ENCODE measurements at regions of chr12 and their contacts with region 1.

Region 1: GRCh38 chr12:87274594-87275245 is 754.5 kb downstream of the C12orf50 start:
- DNase-seq: peak; percentile 47
- H3K4me3 ChIP-seq: no peak overlapping the region
- H3K27ac ChIP-seq: no peak overlapping the region
- H3K4me1 ChIP-seq: no peaks in the 10 kb centered on the region
- H3K27me3 ChIP-seq: no peaks in the 10 kb centered on the region
- CTCF ChIP-seq: peak; percentile 52 to 57
- POLR2A ChIP-seq: no peak

Region 2: GRCh38 chr12:87259391-87259790 is 15.3 kb before region 1 on chr12:
- CTCF ChIA-PET with region 1: interaction called, 9 read pairs
- POLR2A ChIA-PET with region 1: no interaction called
- dilution Hi-C with region 1: no loop called
- intact Hi-C with region 1: loop called (anchors 2 kb)
- DNase-seq: peak; percentile 38
- H3K4me3 ChIP-seq: no peak overlapping the region
- H3K27ac ChIP-seq: no peak overlapping the region
- H3K4me1 ChIP-seq: no peaks in the 10 kb centered on the region
- H3K27me3 ChIP-seq: no peaks in the 10 kb centered on the region
- CTCF ChIP-seq: no peak
- POLR2A ChIP-seq: no peak

Region 3: GRCh38 chr12:87323369-87323768 is 48.6 kb after region 1 on chr12:
- CTCF ChIA-PET with region 1: no interaction called
- POLR2A ChIA-PET with region 1: no interaction called
- dilution Hi-C with region 1: no loop called
- intact Hi-C with region 1: loop called (anchors 2 kb)
- DNase-seq: peak; percentile 91
- H3K4me3 ChIP-seq: no peak overlapping the region
- H3K27ac ChIP-seq: peak overlapping the region; percentile 66
- H3K4me1 ChIP-seq: peaks cover 28% of the 10 kb centered on the region
- H3K27me3 ChIP-seq: no peaks in the 10 kb centered on the region
- CTCF ChIP-seq: no peak
- POLR2A ChIP-seq: no peak

Region 4: DNA sequence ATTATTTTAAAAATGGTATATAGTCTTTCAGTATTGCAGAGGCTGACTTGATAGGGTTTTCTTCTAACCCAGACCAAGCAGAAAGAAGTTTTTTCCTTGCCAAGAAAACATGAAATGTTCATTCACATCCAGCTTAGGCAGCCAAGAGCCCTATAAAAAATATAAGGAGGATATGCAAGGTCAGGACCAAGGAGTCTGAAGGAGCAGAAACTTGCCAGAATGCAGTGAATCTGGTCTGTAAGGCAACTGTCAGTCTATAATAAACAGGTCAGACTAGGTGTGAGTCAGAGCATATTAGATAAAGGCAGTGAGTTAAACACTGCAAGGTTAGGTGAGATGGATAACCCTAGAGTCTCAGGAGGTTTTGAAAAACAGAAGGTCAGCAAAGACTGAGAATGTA is 109.0 kb after region 1 on chr12:
- CTCF ChIA-PET with region 1: interaction called, 3 read pairs
- POLR2A ChIA-PET with region 1: no interaction called
- dilution Hi-C with region 1: no loop called
- intact Hi-C with region 1: loop called (anchors 5 kb)
- DNase-seq: no peak
- H3K4me3 ChIP-seq: no peak overlapping the region
- H3K27ac ChIP-seq: no peak overlapping the region
- H3K4me1 ChIP-seq: no peaks in the 10 kb centered on the region
- H3K27me3 ChIP-seq: peaks cover 0 to 2% of the 10 kb centered on the region in 2 experiments
- CTCF ChIP-seq: no peak
- POLR2A ChIP-seq: no peak

Region 5: DNA sequence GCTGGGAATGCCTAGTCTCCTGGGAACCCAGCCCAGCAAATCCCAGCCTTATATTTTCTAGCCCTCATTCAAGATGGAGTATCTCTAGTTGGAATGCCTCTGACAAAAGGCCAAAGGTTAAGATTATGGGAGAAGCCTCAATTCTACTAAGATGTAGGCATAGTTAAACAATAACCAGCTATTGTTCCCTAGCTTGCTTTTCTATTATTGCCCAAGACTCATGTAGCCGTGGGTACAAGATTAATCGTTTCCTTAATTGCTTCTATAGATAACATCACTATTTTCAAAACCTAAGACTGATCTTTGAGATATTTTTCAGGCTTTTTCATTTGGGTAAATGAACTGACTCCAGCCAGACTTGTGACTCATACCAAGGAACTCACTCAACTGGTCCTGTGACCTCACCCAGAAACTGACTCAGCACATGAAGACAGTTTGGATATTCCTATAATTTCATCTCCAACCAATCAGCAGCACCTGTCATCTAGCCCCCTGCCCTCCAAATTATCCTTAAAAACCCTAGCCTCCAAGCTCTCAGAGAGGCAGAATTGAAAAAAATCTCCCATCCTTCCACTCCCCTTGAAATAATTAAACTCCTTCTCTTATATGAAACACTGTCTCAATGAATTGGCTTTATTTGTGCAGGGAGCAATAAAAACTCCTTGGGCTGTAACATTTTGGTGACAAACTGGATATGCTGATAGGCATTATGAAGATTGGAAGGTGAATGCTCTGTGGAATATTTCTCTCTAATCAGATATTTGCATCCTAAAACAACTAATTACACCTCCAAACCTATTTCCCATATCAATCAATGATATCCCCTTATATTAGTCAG is 165.5 kb after region 1 on chr12:
- CTCF ChIA-PET with region 1: no interaction called
- POLR2A ChIA-PET with region 1: no interaction called
- dilution Hi-C with region 1: no loop called
- intact Hi-C with region 1: loop called (anchors 10 kb)
- DNase-seq: peak; percentile 75
- H3K4me3 ChIP-seq: no peak overlapping the region
- H3K27ac ChIP-seq: no peak overlapping the region
- H3K4me1 ChIP-seq: peaks cover 11% of the 10 kb centered on the region
- H3K27me3 ChIP-seq: peaks cover 0 to 3% of the 10 kb centered on the region in 2 experiments
- CTCF ChIP-seq: no peak
- POLR2A ChIP-seq: no peak

Measured in endothelial cell of umbilical vein (primary cell).